ENCODE measurements at regions of chr6 and their contacts with region 1.

Region 1: GRCh38 chr6:12865671-12866181 is 149.2 kb downstream of the PHACTR1 start:
- DNase-seq: no peak
- ATAC-seq: no peak
- H3K4me3 ChIP-seq: no peak overlapping the region
- H3K27ac ChIP-seq: no peak overlapping the region
- H3K4me1 ChIP-seq: no peaks in the 10 kb centered on the region
- CTCF ChIP-seq: no peak
- EP300 ChIP-seq: no peak
- POLR2A ChIP-seq: no peak
- RAD21 ChIP-seq: no peak

Region 2: GRCh38 chr6:12842114-12842513 is 23.6 kb before region 1 on chr6:
- CTCF ChIA-PET with region 1: no interaction called
- POLR2A ChIA-PET with region 1: no interaction called
- DNase-seq: no peak
- ATAC-seq: no peak
- H3K4me3 ChIP-seq: no peak overlapping the region
- H3K27ac ChIP-seq: no peak overlapping the region
- H3K4me1 ChIP-seq: no peaks in the 10 kb centered on the region
- CTCF ChIP-seq: no peak
- EP300 ChIP-seq: no peak
- POLR2A ChIP-seq: no peak
- RAD21 ChIP-seq: no peak

Region 3: GRCh38 chr6:12893036-12893435 is 27.3 kb after region 1 on chr6:
- CTCF ChIA-PET with region 1: interaction called, 10 read pairs
- POLR2A ChIA-PET with region 1: no interaction called
- DNase-seq: no peak
- ATAC-seq: no peak
- H3K4me3 ChIP-seq: no peak overlapping the region
- H3K27ac ChIP-seq: no peak overlapping the region
- H3K4me1 ChIP-seq: peaks cover 3% of the 10 kb centered on the region; the same call in 1 of the 3 replicates
- CTCF ChIP-seq: no peak
- EP300 ChIP-seq: no peak
- POLR2A ChIP-seq: no peak
- RAD21 ChIP-seq: no peak